Ascending aorta (tissue), 2 donors: ENCODE measurements at regions of chr16 and their contacts with region 1.

Region 1: GRCh38 chr16:17476414-17477270 is 5.9 kb upstream of the XYLT1 start:
- DNase-seq: no peak
- H3K4me3 ChIP-seq: no peak overlapping the region
- H3K27ac ChIP-seq: no peak overlapping the region
- H3K4me1 ChIP-seq: peaks cover 0 to 3% of the 10 kb centered on the region in 2 donors
- H3K27me3 ChIP-seq: no peaks in the 10 kb centered on the region
- CTCF ChIP-seq: peak in 2 of 3 experiments; percentile 50 to 65

Region 2: GRCh38 chr16:17194190-17194780 is 282.4 kb before region 1 on chr16:
- intact Hi-C with region 1: no loop called
- DNase-seq: peak in 1 of 2 donors; percentile 68
- H3K4me3 ChIP-seq: no peak overlapping the region
- H3K27ac ChIP-seq: no peak overlapping the region
- H3K4me1 ChIP-seq: no peaks in the 10 kb centered on the region
- H3K27me3 ChIP-seq: no peaks in the 10 kb centered on the region
- CTCF ChIP-seq: peak; percentile 23 to 68 (median 64)

Region 3: DNA sequence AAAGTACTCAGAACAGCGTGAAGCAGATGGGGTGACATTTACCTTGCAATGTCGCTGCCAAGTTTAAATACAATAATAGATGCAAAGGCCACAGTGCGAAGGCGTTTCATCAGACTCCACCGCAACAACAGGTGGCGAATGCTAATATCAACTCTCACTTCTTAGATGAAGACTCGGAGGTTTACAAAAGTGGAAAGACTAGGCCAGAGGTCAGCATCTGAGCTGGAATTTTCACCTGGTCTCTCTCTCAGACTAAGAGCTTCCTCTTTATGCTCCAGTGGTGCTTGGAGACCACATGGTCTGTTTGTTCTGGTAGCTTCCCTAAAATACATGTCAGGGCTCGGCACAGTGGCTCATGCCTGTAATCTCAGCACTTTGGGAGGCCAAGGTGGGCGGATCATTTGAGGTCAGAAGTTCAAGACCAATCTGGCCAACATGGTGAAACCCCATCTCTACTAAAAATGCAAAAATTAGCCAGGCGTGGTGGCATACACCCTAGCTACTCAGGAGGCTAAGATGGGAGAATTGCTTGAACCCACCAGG is 175.0 kb before region 1 on chr16:
- intact Hi-C with region 1: no loop called
- DNase-seq: no peak
- H3K4me3 ChIP-seq: no peak overlapping the region
- H3K27ac ChIP-seq: no peak overlapping the region
- H3K4me1 ChIP-seq: peaks cover 4% of the 10 kb centered on the region in 2 donors
- H3K27me3 ChIP-seq: no peaks in the 10 kb centered on the region
- CTCF ChIP-seq: no peak

Region 4: DNA sequence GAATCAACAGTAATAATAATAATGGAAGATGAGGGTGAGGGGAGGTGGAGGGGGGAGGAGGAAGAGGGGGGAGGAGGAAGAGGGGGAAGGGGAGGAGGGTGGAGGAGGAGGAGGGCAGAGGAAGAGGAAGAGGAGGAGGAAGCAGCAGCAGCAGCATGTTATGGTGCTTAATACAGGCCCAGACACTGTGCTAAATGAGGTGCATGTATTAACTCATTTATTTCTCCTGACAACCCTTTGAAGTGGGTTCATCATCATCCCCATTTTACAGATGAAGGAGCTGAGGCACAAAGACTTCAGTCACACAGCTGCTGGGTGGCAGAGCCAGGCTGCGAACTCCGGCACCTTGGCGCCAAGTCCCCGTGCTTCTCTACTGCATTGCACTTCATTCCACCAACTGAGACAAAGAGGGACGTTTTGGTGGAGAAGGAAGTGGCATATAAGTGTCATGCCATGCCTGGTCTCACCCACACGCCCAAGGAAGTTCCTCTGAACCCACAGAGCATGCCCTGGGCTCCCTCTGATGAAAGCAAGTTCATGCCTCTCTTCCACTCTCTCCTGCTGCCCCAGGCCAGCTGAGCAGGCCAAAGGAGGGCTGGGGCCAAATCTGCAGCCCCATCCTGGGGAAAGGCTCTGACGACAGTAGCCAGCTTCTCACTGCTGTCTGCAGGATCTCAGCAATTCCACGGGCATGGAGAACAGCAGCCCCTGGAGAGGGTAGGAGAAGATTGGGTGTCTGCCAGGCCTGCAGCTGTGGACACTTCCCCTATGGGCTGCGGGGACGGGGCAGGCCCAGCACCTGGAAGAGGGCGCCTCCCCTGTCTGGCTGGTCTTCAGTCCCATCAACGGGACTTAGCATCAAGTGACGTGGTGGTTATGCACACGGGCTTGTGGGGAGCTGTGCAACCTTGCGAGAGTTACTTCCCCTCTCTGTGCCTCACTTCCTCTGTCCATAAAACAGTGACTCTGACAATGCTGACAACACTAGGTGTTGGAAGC is 27.7 kb before region 1 on chr16:
- intact Hi-C with region 1: no loop called
- DNase-seq: no peak
- H3K4me3 ChIP-seq: no peak overlapping the region
- H3K27ac ChIP-seq: no peak overlapping the region
- H3K4me1 ChIP-seq: no peaks in the 10 kb centered on the region
- H3K27me3 ChIP-seq: no peaks in the 10 kb centered on the region
- CTCF ChIP-seq: no peak

Region 5: GRCh38 chr16:17578921-17579874 is 102.6 kb after region 1 on chr16:
- intact Hi-C with region 1: loop called (anchors 2 kb)
- DNase-seq: peak in 1 of 2 donors; percentile 80
- H3K4me3 ChIP-seq: no peak overlapping the region
- H3K27ac ChIP-seq: no peak overlapping the region
- H3K4me1 ChIP-seq: no peaks in the 10 kb centered on the region
- H3K27me3 ChIP-seq: no peaks in the 10 kb centered on the region
- CTCF ChIP-seq: peak; percentile 62 to 92 (median 65)